ENCODE measurements at regions of chr3 and their contacts with region 1.

Region 1: GRCh38 chr3:157532529-157533297 is 29.5 kb upstream of the VEPH1 start:
- DNase-seq: peak; percentile 37 to 80
- H3K4me3 ChIP-seq: no peak overlapping the region
- H3K27ac ChIP-seq: no peak overlapping the region
- H3K4me1 ChIP-seq: peaks cover 6% of the 10 kb centered on the region
- H3K27me3 ChIP-seq: no peaks in the 10 kb centered on the region
- CTCF ChIP-seq: peak; percentile 95

Region 2: DNA sequence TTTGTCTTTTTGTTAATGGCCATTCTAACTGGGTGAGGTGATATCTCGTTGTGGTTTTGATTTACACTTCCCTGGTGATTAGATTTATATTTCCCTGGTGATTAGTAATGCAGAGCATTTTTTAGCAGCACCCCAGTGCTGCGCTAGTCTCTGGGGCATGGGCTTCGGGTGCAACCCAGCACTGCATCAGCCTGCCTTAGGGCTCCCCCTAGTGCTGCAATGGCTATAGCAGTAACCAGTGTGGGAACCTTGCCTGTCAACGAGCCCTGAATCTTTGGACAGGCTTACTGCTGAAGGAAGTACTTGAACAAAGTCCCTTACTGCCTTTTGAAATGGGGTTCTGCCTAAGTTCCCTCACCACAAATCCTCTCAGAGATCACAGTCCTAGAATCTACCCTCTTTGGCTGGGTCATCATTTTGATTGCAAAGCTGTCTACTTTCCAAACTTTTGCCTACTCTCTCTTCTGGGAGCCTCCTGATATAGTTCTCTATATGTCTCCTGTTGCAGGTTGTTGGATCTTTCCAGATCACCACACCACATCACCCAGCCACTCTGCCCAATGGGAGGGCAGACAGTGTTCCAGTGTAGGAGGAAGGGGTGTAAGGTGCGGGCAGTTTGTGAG is 293.5 kb before region 1 on chr3:
- CTCF ChIA-PET with region 1: no interaction called
- POLR2A ChIA-PET with region 1: no interaction called
- intact Hi-C with region 1: no loop called
- DNase-seq: peak in 1 of 2 experiments; percentile 16
- H3K4me3 ChIP-seq: no peak overlapping the region
- H3K27ac ChIP-seq: no peak overlapping the region
- H3K4me1 ChIP-seq: no peaks in the 10 kb centered on the region
- H3K27me3 ChIP-seq: no peaks in the 10 kb centered on the region
- CTCF ChIP-seq: peak; percentile 71

Region 3: DNA sequence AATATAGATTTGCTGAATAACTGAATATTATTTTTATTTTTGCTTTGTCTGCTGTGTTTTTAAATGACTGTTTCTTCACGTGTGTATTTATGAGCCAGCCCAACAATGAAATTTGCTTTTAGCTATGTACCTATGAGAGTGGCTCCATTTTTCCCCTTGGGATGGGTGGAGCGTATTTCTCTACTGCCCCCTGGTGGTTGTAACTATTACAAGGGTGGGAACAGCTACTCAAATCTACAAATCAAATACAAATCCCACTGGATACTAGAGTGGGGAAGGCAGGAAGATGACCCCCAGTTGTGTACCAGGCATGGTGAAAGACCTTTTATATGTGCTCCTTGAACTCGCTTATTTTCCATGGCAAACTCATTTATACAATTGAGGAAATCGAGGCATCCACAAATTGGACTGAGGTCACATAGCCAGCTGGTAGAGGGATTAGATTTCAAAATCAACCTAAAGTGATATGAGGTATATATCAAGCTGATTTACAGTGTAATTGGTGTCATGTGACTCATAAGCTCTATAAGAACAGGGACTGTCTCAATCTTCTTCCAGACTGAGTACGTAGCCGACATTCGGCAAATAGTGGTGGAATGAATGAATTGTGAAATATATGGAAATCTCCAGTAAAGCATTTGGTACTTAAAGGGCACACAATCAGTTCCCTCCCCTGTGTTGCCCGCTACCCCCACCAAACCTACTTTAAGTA is 40.0 kb after region 1 on chr3:
- CTCF ChIA-PET with region 1: interaction called, 19 read pairs
- POLR2A ChIA-PET with region 1: interaction called, 12 read pairs
- intact Hi-C with region 1: loop called (anchors 1 kb)
- DNase-seq: peak in 1 of 2 experiments; percentile 17
- H3K4me3 ChIP-seq: no peak overlapping the region
- H3K27ac ChIP-seq: no peak overlapping the region
- H3K4me1 ChIP-seq: 0 out of 2 replicates have a peak, but pooled peaks cover 3% of the 10 kb centered on the region
- H3K27me3 ChIP-seq: no peaks in the 10 kb centered on the region
- CTCF ChIP-seq: peak; percentile 91

Region 4: GRCh38 chr3:158313338-158313927 is 780.7 kb after region 1 on chr3:
- CTCF ChIA-PET with region 1: no interaction called
- POLR2A ChIA-PET with region 1: no interaction called
- intact Hi-C with region 1: loop called (anchors 10 kb)
- DNase-seq: no peak
- H3K4me3 ChIP-seq: no peak overlapping the region
- H3K27ac ChIP-seq: no peak overlapping the region
- H3K4me1 ChIP-seq: no peaks in the 10 kb centered on the region
- H3K27me3 ChIP-seq: no peaks in the 10 kb centered on the region
- CTCF ChIP-seq: peak; percentile 79

Region 5: GRCh38 chr3:158532099-158532734 is 999.5 kb after region 1 on chr3:
- CTCF ChIA-PET with region 1: interaction called, 4 read pairs
- POLR2A ChIA-PET with region 1: no interaction called
- intact Hi-C with region 1: loop called (anchors 2 kb)
- DNase-seq: peak; percentile 14 to 36
- H3K4me3 ChIP-seq: no peak overlapping the region
- H3K27ac ChIP-seq: no peak overlapping the region
- H3K4me1 ChIP-seq: no peaks in the 10 kb centered on the region
- H3K27me3 ChIP-seq: no peaks in the 10 kb centered on the region
- CTCF ChIP-seq: peak; percentile 85